Ovary (tissue), 10 donors: ENCODE measurements at regions of chr11 and their contacts with region 1.

Region 1: GRCh38 chr11:2305140-2305840 is 3.5 kb downstream of the TSPAN32 start:
- DNase-seq: peak; percentile 82 to 91 (median 88)
- H3K4me3 ChIP-seq: no peak overlapping the region
- H3K27ac ChIP-seq: peak overlapping the region; percentile 48 to 71
- H3K4me1 ChIP-seq: peaks cover 27% of the 10 kb centered on the region
- H3K27me3 ChIP-seq: no peaks in the 10 kb centered on the region
- CTCF ChIP-seq: peak; percentile 74 to 94 (median 89)
- EP300 ChIP-seq: no peak
- POLR2A ChIP-seq: no peak

Region 2: GRCh38 chr11:2186669-2187279 is 118.5 kb before region 1 on chr11:
- intact Hi-C with region 1: no loop called
- DNase-seq: no peak
- H3K4me3 ChIP-seq: no peak overlapping the region
- H3K27ac ChIP-seq: no peak overlapping the region
- H3K4me1 ChIP-seq: no peaks in the 10 kb centered on the region
- H3K27me3 ChIP-seq: no peaks in the 10 kb centered on the region
- CTCF ChIP-seq: no peak
- EP300 ChIP-seq: no peak
- POLR2A ChIP-seq: no peak

Region 3: GRCh38 chr11:2290351-2290841 is 14.9 kb before region 1 on chr11:
- intact Hi-C with region 1: loop called in 1 of 4 experiments (anchors 1 kb)
- DNase-seq: peak in 1 of 5 donors; percentile 10
- H3K4me3 ChIP-seq: no peak overlapping the region
- H3K27ac ChIP-seq: no peak overlapping the region
- H3K4me1 ChIP-seq: no peaks in the 10 kb centered on the region
- H3K27me3 ChIP-seq: no peaks in the 10 kb centered on the region
- CTCF ChIP-seq: no peak
- EP300 ChIP-seq: no peak
- POLR2A ChIP-seq: no peak

Region 4: GRCh38 chr11:2382936-2383851 is 77.9 kb after region 1 on chr11:
- intact Hi-C with region 1: loop called in 3 of 4 experiments (anchors 5 kb)
- DNase-seq: peak; percentile 60 to 74 (median 66)
- H3K4me3 ChIP-seq: peak overlapping the region; percentile 3
- H3K27ac ChIP-seq: peak overlapping the region; percentile 62 to 66
- H3K4me1 ChIP-seq: peaks cover 57% of the 10 kb centered on the region
- H3K27me3 ChIP-seq: no peaks in the 10 kb centered on the region
- CTCF ChIP-seq: no peak
- EP300 ChIP-seq: no peak
- POLR2A ChIP-seq: no peak

Region 5: DNA sequence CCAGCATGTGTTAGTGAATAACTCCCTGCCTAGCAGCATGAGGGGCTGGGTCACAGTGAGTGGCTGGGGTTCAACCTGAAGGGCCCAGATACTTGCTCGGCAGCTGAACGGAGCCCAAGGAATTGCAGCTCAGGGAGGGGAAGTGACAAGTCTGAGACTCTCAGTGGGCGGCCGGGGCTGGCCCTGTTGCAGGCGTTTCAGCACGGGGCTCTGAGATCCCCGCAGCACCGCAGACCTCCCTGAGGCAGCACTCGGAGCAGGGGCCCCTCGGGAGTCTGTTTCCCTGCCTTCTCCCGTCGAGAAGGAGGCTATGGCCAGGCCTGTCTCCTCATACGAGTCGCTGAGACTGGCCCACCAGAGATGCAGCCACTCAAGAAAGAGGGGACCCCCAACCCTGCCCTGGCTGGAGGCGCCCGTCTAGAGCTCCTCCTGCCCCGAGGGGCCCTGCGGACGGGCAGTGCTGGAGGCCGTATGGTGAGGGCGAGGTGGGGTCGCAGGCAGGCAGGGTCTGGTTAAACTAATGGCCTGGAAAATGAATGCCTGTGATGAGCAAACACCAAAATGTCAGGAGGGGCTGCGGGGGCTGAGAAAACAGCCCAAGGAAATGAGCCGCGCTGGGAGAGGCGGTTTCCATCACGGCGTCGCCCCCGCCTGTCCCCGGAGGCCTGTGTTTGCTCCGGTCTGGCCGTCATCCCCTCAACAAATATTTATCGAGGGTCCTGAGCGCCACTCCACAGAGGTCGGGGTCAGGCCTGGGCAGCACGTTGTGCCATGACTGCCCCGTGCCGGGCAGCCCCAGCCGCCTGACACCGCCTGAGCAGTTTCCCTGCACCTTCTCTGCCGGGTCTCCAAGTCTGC is 104.5 kb after region 1 on chr11:
- intact Hi-C with region 1: loop called in 1 of 4 experiments (anchors 2 kb)
- DNase-seq: no peak
- H3K4me3 ChIP-seq: no peak overlapping the region
- H3K27ac ChIP-seq: no peak overlapping the region
- H3K4me1 ChIP-seq: no peaks in the 10 kb centered on the region
- H3K27me3 ChIP-seq: no peaks in the 10 kb centered on the region
- CTCF ChIP-seq: no peak
- EP300 ChIP-seq: no peak
- POLR2A ChIP-seq: no peak

Region 6: GRCh38 chr11:2420502-2421225 is 115.4 kb after region 1 on chr11:
- intact Hi-C with region 1: loop called in 3 of 4 experiments (anchors 1 to 2 kb)
- DNase-seq: peak; percentile 66 to 86 (median 75)
- H3K4me3 ChIP-seq: no peak overlapping the region
- H3K27ac ChIP-seq: no peak overlapping the region
- H3K4me1 ChIP-seq: peaks cover 2% of the 10 kb centered on the region
- H3K27me3 ChIP-seq: no peaks in the 10 kb centered on the region
- CTCF ChIP-seq: peak; percentile 90 to 94 (median 92)
- EP300 ChIP-seq: no peak
- POLR2A ChIP-seq: peak; percentile 11

Region 7: DNA sequence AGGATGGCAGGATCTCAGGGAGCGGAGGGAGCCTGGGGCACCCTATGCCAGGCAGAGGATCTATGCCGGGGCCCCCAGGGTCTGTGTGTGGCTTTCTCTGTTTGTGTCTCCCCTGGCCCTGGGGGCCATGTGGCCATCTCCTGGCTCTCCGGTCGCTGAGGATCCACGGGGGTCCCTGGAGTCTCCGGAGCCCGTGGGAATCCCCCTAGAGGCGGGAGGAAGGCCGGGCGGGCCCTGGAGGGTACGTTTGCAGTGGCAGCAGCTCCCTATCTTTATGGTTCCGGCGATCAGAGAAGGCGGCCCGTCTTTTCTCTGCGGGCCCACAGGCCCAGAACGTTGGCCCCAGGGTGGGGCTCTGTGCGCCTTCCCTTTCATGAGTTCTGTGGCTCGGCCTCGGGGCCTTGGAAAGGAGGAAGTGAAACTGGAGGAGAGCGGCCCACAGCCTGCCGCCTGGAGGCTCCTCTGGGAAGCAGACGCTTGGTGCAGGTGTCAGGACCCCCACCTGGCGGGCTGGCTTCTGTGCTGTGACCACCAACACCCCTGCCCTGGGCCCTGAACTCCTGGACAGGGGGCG is 221.6 kb after region 1 on chr11:
- intact Hi-C with region 1: loop called in 2 of 4 experiments (anchors 10 kb)
- DNase-seq: peak; percentile 9 to 38 (median 18)
- H3K4me3 ChIP-seq: no peak overlapping the region
- H3K27ac ChIP-seq: no peak overlapping the region
- H3K4me1 ChIP-seq: no peaks in the 10 kb centered on the region
- H3K27me3 ChIP-seq: no peaks in the 10 kb centered on the region
- CTCF ChIP-seq: no peak
- EP300 ChIP-seq: no peak
- POLR2A ChIP-seq: no peak

Region 8: GRCh38 chr11:2892215-2893020 is 587.1 kb after region 1 on chr11:
- intact Hi-C with region 1: loop called in 1 of 4 experiments (anchors 5 kb)
- DNase-seq: peak; percentile 70 to 80 (median 78)
- H3K4me3 ChIP-seq: peak overlapping the region; percentile 37
- H3K27ac ChIP-seq: peak overlapping the region; percentile 73 to 85
- H3K4me1 ChIP-seq: peaks cover 15% of the 10 kb centered on the region
- H3K27me3 ChIP-seq: no peaks in the 10 kb centered on the region
- CTCF ChIP-seq: peak; percentile 97 to 99 (median 98)
- EP300 ChIP-seq: no peak
- POLR2A ChIP-seq: no peak